ENCODE measurements at regions of chr12 and their contacts with region 1.

Region 1: GRCh38 chr12:95428472-95428871 is 45.5 kb upstream of the METAP2 start:
- DNase-seq: peak; percentile 85
- H3K4me3 ChIP-seq: peak overlapping the region; percentile 28
- H3K27ac ChIP-seq: peak overlapping the region; percentile 48
- H3K4me1 ChIP-seq: peaks cover 26% of the 10 kb centered on the region
- CTCF ChIP-seq: no peak

Region 2: DNA sequence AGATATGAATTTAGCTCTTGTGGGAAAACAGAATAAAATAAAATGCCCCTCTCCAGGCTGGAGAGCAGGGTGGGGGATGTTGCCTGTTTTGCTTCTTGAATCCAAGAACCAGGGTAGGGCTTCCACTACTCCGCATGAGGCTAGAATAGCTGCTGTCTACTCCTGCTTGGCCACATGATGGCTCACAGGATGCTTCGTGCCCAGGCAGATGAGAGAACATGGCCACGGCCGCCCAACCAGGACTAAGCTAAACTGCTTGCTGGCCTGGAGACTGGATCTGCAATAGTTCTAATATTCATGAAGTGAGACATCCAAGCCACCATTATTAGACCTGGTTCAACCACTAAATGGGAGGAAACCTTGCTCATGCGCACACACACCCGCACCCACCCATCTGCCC is 76.7 kb before region 1 on chr12:
- CTCF ChIA-PET with region 1: no interaction called
- POLR2A ChIA-PET with region 1: no interaction called
- intact Hi-C with region 1: loop called (anchors 2 kb)
- DNase-seq: no peak
- H3K4me3 ChIP-seq: no peak overlapping the region
- H3K27ac ChIP-seq: peak overlapping the region; percentile 63
- H3K4me1 ChIP-seq: peaks cover 62% of the 10 kb centered on the region
- CTCF ChIP-seq: no peak